HepG2 (cell line): ENCODE measurements at regions of chr2 and their contacts with region 1.

Region 1: GRCh38 chr2:161586517-161587167 is 37.6 kb upstream of the SLC4A10 start:
- DNase-seq: peak; percentile 22
- ATAC-seq: peak; percentile 66
- H3K4me3 ChIP-seq: no peak overlapping the region
- H3K27ac ChIP-seq: no peak overlapping the region
- H3K4me1 ChIP-seq: no peaks in the 10 kb centered on the region
- H3K27me3 ChIP-seq: no peaks in the 10 kb centered on the region
- CTCF ChIP-seq: peak; percentile 69
- EP300 ChIP-seq: no peak
- POLR2A ChIP-seq: no peak
- RAD21 ChIP-seq: peak; percentile 60

Region 2: GRCh38 chr2:162143969-162144368 is 557.3 kb after region 1 on chr2:
- CTCF ChIA-PET with region 1: no interaction called
- POLR2A ChIA-PET with region 1: no interaction called
- in situ Hi-C with region 1: no loop called
- intact Hi-C with region 1: loop called (anchors 1 kb)
- DNase-seq: peak; percentile 9
- ATAC-seq: no peak
- H3K4me3 ChIP-seq: no peak overlapping the region
- H3K27ac ChIP-seq: no peak overlapping the region
- H3K4me1 ChIP-seq: no peaks in the 10 kb centered on the region
- H3K27me3 ChIP-seq: peaks cover 0 to 14% of the 10 kb centered on the region in 2 experiments; a peak in 3 of 5 replicates
- CTCF ChIP-seq: peak; percentile 43
- EP300 ChIP-seq: no peak
- POLR2A ChIP-seq: no peak
- RAD21 ChIP-seq: no peak